Left cardiac atrium (tissue), 4 donors: ENCODE measurements at regions of chr7 and their contacts with region 1.

Region 1: DNA sequence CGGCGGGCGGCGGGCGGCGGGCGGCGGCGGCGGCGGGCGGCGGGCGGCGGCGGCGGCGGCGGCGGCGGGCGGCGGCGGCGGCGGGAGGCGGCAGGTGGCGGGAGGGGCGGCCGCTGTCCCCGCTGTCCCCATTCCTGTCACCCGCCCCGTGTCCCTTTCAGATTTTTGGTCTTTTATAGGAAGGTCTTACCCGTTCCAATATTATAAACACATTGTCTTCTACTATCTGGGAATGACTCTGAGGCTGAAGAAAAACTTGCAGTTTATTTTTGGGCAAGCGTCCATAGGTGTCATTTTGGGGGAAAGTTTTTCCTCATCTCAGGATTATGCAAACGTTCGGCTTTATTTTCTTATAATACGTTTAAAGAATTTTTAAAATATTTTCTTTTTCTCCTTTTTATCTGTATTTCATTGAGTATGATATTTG is 578 bp downstream of the ZNF713 start:
- DNase-seq: no peak
- ATAC-seq: no peak

Region 2: GRCh38 chr7:55964261-55965099 is 76.6 kb after region 1 on chr7 and contains the start of gene NIPSNAP2:
- intact Hi-C with region 1: loop called in 1 of 2 experiments (anchors 5 kb)
- DNase-seq: peak; percentile 90
- ATAC-seq: peak; percentile 93 to 96
- total RNA-seq, gene NIPSNAP2: 196 to 205 TPM

Region 3: GRCh38 chr7:56578617-56579016 is 690.8 kb after region 1 on chr7:
- intact Hi-C with region 1: no loop called
- DNase-seq: no peak
- ATAC-seq: no peak